ENCODE measurements at regions of chr14 and their contacts with region 1.

Region 1: GRCh38 chr14:54175298-54175942 is 218.8 kb upstream of the BMP4 start:
- DNase-seq: peak in 1 of 2 donors; percentile 68
- H3K4me3 ChIP-seq: no peak overlapping the region
- CTCF ChIP-seq: peak in 1 of 3 donors; percentile 80
- POLR2A ChIP-seq: no peak

Region 2: DNA sequence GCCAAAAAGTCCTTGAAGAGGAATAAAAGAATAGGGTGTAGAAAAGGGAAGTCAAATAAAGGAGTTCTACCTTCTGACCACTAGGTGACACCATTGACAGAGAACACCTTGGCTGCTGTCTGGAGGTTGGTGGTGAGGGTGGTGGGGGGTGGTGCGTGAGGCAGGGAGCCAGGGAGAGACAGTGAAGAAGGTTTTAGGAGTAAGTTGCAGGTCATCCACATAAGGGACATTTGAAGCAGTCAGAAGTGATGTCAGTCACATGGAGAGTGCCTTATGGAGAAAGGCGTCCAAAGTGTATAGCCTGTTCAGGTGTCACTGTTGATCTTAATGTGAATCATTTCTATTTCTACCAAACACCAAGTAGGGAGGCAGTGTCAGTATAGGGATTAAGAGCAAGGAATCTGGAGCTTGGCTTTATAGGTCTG is 743.0 kb before region 1 on chr14:
- intact Hi-C with region 1: loop called (anchors 10 kb)
- DNase-seq: no peak
- H3K4me3 ChIP-seq: no peak overlapping the region
- CTCF ChIP-seq: no peak
- POLR2A ChIP-seq: no peak

Region 3: DNA sequence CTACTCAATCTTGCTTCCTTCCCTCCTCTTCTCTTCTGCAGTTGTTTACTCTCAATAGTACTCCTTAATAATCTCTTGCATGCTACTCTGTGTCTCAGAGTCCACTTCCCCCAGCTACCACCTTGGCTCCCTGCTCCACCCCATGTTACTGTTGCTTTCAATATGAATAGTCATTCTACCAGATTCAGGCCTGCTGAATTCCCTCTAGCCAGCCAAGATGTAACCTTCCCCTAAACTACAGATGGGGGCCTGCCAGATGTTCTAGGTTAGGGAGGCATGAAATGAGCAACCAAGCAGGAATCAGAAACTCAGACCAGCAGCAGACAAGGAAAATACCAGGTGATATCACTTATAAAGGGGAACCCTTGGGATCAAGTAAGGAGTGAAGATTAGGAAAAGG is 630.2 kb before region 1 on chr14:
- intact Hi-C with region 1: loop called (anchors 5 kb)
- DNase-seq: no peak
- H3K4me3 ChIP-seq: no peak overlapping the region
- CTCF ChIP-seq: no peak
- POLR2A ChIP-seq: no peak